Esophagus muscularis mucosa (tissue), 4 donors: ENCODE measurements at regions of chr7 and their contacts with region 1.

Region 1: DNA sequence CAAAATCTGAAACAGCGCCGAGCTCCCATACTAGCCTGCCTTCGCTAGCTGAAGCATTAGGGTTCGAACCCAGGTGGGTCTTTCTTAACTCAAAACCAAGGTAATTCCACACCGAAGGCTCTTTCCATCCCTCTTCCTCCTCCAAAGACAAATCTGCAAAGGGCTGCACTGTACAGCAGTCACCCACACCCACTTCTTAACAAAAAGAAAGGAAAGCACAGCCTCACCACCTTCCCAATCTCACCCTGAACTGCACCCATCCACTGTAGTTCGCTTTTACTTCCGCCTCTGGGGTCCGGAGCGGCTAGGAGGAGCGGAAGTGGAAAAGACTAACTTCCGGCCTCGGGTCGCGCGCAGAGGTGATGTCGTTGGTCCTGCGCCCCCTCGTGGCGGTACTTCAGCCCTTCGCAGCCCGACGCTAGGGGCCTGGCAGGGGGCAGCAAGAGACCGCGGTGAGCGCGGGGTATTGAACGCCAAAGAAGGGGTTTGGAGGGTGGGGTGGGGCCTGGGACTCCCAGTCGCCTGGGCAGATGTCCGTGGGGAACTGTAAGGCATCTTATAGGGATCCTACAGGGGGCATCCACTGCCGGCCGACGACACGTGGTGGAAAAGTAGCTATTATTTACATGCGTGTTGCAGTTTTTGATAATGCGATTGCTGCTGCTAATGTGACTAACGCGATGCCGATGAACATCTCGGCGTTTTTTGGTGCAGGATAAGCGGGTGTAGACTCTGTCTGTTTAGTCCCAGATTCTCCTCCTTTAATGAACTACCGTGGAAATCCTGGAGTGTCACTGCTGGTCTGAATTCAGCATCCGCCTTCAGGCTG is at the start of gene MTERF1:
- DNase-seq: peak; percentile 96
- H3K4me3 ChIP-seq: peak within 1 kb of the TSS; percentile 66 to 85 (median 75)
- H3K27ac ChIP-seq: peak within 1 kb of the TSS; percentile 62 to 75 (median 68)
- H3K4me1 ChIP-seq: peaks cover 14 to 21% (median 17%) of the 10 kb centered on the region in 4 donors
- H3K27me3 ChIP-seq: no peaks in the 10 kb centered on the region
- CTCF ChIP-seq: peak; percentile 95 to 98 (median 97)
- EP300 ChIP-seq: no peak
- POLR2A ChIP-seq: no peak
- total RNA-seq, gene MTERF1: 4.3 to 7.9 (median 5.2) TPM

Region 2: DNA sequence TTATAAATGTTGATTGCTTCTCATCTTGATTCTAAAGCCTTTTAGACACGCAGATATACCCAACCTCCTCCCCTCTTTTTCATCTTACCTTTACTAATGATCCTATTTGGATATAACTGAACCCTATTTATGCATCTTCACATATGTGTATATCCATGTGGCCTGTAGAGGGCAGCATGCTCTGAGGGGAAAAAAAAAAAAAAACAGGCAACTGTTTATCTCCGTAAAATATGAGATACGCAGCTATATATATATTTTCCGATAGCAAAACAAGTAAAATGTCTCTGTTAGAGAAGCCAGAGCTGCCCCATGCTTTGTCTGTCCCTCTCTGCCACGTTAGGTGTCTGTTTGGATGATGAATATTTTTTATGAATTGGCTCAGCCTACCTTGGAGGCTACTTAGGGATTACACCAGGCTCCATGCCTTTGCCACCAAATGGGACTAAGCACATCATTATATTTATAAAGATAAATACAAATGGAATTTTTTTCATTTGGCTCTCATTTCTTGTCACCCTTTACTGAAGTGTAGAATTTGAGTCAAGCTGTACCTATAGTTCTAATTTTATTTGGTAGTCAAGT is 791.2 kb before region 1 on chr7:
- intact Hi-C with region 1: loop called (anchors 10 kb)
- DNase-seq: no peak
- H3K4me3 ChIP-seq: peak overlapping the region; percentile 26 to 43 (median 34)
- H3K27ac ChIP-seq: no peak overlapping the region
- H3K4me1 ChIP-seq: peaks cover 0 to 12% (median 4%) of the 10 kb centered on the region in 4 donors
- H3K27me3 ChIP-seq: no peaks in the 10 kb centered on the region
- CTCF ChIP-seq: peak; percentile 51 to 81 (median 62)
- EP300 ChIP-seq: no peak
- POLR2A ChIP-seq: no peak

Region 3: GRCh38 chr7:91683823-91684222 is 196.8 kb before region 1 on chr7:
- intact Hi-C with region 1: no loop called
- DNase-seq: no peak
- H3K4me3 ChIP-seq: no peak overlapping the region
- H3K27ac ChIP-seq: no peak overlapping the region
- H3K4me1 ChIP-seq: no peaks in the 10 kb centered on the region
- H3K27me3 ChIP-seq: no peaks in the 10 kb centered on the region
- CTCF ChIP-seq: no peak
- EP300 ChIP-seq: no peak
- POLR2A ChIP-seq: no peak

Region 4: GRCh38 chr7:91720260-91720937 is 160.2 kb before region 1 on chr7:
- intact Hi-C with region 1: no loop called
- DNase-seq: no peak
- H3K4me3 ChIP-seq: no peak overlapping the region
- H3K27ac ChIP-seq: no peak overlapping the region
- H3K4me1 ChIP-seq: no peaks in the 10 kb centered on the region
- H3K27me3 ChIP-seq: no peaks in the 10 kb centered on the region
- CTCF ChIP-seq: no peak
- EP300 ChIP-seq: no peak
- POLR2A ChIP-seq: no peak

Region 5: GRCh38 chr7:91832493-91833045 is 48.1 kb before region 1 on chr7:
- intact Hi-C with region 1: loop called (anchors 5 kb)
- DNase-seq: no peak
- H3K4me3 ChIP-seq: no peak overlapping the region
- H3K27ac ChIP-seq: no peak overlapping the region
- H3K4me1 ChIP-seq: peaks cover 0 to 8% (median 0%) of the 10 kb centered on the region in 4 donors
- H3K27me3 ChIP-seq: no peaks in the 10 kb centered on the region
- CTCF ChIP-seq: no peak
- EP300 ChIP-seq: no peak
- POLR2A ChIP-seq: no peak

Region 6: GRCh38 chr7:91940572-91941341 is 60.1 kb after region 1 on chr7 and contains the start of gene AKAP9:
- intact Hi-C with region 1: loop called (anchors 5 kb)
- DNase-seq: peak; percentile 96
- H3K4me3 ChIP-seq: peak within 1 kb of the TSS; percentile 72 to 87 (median 80)
- H3K27ac ChIP-seq: peak within 1 kb of the TSS; percentile 88 to 96 (median 94)
- H3K4me1 ChIP-seq: peaks cover 30 to 48% (median 46%) of the 10 kb centered on the region in 4 donors
- H3K27me3 ChIP-seq: no peaks in the 10 kb centered on the region
- CTCF ChIP-seq: peak in 1 of 3 experiments; percentile 8
- EP300 ChIP-seq: no peak
- POLR2A ChIP-seq: no peak
- total RNA-seq, gene AKAP9: 33.6 to 60.2 (median 39.3) TPM

Region 7: GRCh38 chr7:92044148-92044547 is 163.5 kb after region 1 on chr7:
- intact Hi-C with region 1: no loop called
- DNase-seq: no peak
- H3K4me3 ChIP-seq: peak overlapping the region in 1 of 4 donors; percentile 21
- H3K27ac ChIP-seq: peak overlapping the region; percentile 53 to 76 (median 60)
- H3K4me1 ChIP-seq: peaks cover 11 to 25% (median 18%) of the 10 kb centered on the region in 4 donors
- H3K27me3 ChIP-seq: no peaks in the 10 kb centered on the region
- CTCF ChIP-seq: no peak
- EP300 ChIP-seq: no peak
- POLR2A ChIP-seq: no peak

Region 8: DNA sequence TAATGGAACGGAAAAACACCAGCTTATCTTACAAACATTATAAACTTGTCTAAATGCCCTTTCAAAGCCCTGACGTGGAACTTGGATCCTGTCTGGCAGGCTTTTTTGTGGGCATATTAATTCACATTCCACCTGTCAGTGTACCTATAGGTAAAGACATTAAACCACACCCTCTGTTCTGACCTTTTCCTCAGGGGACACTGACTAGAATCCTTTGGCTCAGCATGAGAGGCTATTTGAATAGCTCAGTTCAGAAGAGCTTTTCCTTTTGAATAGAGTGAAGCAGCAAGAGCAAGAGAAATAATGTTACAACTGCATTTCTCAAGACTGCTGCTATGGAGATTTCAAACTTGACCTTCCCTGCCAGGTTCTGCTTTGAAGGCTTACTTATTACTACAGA is 176.7 kb after region 1 on chr7:
- intact Hi-C with region 1: loop called (anchors 10 kb)
- DNase-seq: no peak
- H3K4me3 ChIP-seq: no peak overlapping the region
- H3K27ac ChIP-seq: peak overlapping the region; percentile 16 to 59 (median 49)
- H3K4me1 ChIP-seq: peaks cover 9 to 35% (median 29%) of the 10 kb centered on the region in 4 donors
- H3K27me3 ChIP-seq: no peaks in the 10 kb centered on the region
- CTCF ChIP-seq: no peak
- EP300 ChIP-seq: no peak
- POLR2A ChIP-seq: no peak

Region 9: DNA sequence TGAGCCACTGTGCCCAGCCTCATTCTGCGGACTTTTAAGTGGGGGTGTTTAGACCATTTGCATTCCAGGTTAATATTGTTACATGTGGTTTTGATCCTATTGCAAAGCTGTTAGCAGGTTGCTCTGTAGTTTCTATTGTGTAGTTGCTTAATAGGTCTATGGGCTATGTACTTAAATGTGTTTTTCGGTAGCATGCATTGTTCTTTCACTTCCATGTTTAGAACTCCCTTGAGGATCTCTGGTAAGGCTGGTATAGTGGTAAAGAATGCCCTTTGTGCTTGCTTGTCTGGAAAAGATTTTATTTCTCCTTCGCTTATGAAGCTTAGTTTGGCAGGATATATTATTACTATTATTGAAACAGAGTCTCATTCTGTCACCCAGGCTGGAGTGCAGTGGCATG is 311.7 kb after region 1 on chr7:
- intact Hi-C with region 1: no loop called
- DNase-seq: no peak
- H3K4me3 ChIP-seq: no peak overlapping the region
- H3K27ac ChIP-seq: no peak overlapping the region
- H3K4me1 ChIP-seq: no peaks in the 10 kb centered on the region
- H3K27me3 ChIP-seq: no peaks in the 10 kb centered on the region
- CTCF ChIP-seq: no peak
- EP300 ChIP-seq: no peak
- POLR2A ChIP-seq: no peak